ENCODE measurements at regions of chr20 and their contacts with region 1.

Region 1: DNA sequence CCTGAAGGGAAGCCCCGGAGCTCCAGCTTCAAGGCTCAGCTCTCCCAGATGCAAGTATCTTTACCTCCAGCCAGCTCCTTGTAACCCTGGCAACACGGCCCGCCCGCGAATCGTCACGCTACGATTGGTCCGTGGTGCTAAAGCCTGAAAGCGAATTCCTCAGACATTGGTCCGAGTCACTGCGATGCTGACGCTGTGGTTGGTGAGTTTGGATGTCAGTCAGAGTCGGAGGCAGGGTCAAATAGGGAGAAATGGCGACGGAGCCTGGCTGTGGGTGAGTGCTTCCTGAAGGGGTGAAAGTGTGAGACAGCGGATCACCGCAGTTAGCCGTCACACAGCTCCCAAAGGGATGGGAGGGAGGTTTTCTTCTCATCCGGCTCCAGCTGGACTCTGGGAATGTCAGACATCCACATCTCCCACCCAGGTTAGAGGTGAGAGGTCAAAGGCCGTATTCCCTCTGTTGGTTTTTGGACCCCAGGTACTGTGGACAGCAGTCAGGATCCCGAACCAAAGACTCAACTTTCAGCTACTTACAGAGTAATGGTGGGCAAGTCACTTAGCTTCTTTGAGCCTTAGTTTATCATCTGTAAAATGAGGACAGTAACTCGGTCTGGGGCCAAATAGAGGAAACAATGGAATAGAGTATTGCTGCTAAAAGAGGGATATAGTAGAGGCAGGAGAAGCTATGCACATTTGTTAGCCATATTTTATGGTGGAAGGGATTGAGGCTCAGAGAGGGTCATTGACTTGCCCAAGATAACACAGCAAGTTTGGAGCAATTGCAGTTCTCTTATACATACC is at the start of gene ZSWIM1:
- DNase-seq: peak; percentile 100
- ATAC-seq: peak; percentile 99
- H3K4me3 Mint-ChIP-seq: peak within 1 kb of the TSS; percentile 94
- H3K27ac Mint-ChIP-seq: peak within 1 kb of the TSS; percentile 93
- H3K4me1 Mint-ChIP-seq: peaks cover 43% of the 10 kb centered on the region
- H3K27me3 Mint-ChIP-seq: no peaks in the 10 kb centered on the region
- CTCF ChIP-seq: no peak
- total RNA-seq, gene ZSWIM1: 8.2 to 9.1 TPM

Region 2: DNA sequence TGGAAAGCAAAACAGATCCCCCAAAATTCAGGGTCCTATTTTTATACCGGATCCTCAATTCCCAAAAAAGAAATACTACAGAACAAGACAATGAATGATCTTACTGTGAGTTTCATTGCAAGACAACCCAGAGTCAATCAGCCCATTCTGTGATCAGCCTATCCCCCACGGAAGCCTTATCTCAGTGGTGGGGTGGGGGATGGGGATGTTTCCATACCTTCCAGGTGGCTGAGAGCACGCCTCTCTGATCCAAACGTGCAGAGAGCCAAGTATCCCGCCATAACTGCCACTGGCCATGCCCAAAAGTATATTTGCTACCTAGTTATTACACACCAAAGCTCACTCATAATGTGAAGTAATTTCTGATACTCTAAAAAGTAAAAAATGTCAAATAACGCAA is 396.5 kb before region 1 on chr20:
- CTCF ChIA-PET with region 1: no interaction called
- POLR2A ChIA-PET with region 1: no interaction called
- intact Hi-C with region 1: no loop called
- DNase-seq: no peak
- ATAC-seq: no peak
- H3K4me3 Mint-ChIP-seq: no peak overlapping the region
- H3K27ac Mint-ChIP-seq: no peak overlapping the region
- H3K4me1 Mint-ChIP-seq: no peaks in the 10 kb centered on the region
- H3K27me3 Mint-ChIP-seq: peaks cover 35% of the 10 kb centered on the region
- CTCF ChIP-seq: no peak

Region 3: DNA sequence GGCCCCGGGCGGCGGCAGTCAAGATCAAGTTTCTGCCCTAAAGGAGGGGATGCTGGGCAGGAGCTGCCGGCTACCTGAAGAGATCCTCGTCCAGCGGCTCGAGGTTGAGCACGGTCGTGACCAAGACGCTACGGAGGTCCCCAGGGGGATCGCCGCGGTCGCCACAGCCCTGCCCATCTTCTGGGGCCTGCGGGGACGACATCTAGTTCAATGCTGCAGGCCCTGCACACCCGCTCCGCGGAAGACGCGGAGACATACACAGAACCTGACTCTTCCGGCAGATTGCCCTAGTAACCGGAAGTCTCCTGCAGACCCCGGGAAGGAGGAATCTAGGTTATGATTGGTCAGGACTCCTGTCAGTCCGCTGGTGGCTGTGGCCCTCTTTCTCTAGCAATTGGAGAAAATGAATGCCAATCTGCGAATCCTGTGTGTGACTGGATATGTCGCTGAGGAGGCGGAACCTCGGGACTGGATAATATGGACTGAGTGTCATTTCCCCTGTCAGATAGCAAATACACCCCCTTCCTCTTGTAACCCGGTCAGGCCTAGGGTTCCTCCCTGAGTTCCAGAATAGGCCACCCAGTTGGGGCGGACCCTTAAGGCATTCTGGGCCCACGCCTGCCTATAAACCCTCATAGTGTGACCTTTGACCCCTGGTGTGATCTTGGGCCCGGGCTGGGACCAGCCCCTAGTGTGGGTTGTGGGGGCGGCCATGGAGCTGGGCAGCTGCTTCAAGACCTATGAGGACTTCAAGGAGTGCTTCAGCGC is 23.9 kb before region 1 on chr20 and contains the starts of genes ACOT8 and ZSWIM3:
- CTCF ChIA-PET with region 1: interaction called, 4 read pairs
- POLR2A ChIA-PET with region 1: interaction called, 18 read pairs
- intact Hi-C with region 1: no loop called
- DNase-seq: peak; percentile 98
- ATAC-seq: peak; percentile 96
- H3K4me3 Mint-ChIP-seq: peak within 1 kb of the TSS; percentile 97
- H3K27ac Mint-ChIP-seq: peak within 1 kb of the TSS; percentile 99
- H3K4me1 Mint-ChIP-seq: peaks cover 42% of the 10 kb centered on the region
- H3K27me3 Mint-ChIP-seq: no peaks in the 10 kb centered on the region
- CTCF ChIP-seq: no peak
- total RNA-seq, gene ACOT8: 18.5 to 21.2 TPM
- total RNA-seq, gene ZSWIM3: 3.5 to 3.6 TPM

Region 4: DNA sequence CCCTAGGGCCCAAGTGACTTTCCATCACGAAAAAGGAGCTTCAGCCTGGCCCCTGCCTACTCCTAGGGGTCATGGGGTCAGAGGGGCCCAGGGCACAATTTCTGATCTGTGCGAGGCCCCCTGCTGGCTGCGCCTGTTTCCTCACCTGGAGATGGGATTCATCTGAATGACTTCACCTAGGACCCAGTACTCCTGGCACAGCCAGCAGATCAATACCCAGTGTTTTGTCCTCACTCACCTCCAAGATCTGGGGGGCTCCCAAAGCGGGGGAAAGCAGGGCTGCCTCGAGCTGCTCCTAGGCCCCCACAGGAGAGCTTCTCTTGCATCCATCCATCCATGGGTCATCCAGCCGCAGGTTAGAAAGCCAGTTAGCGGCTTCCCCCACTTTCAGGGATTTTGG is 270.7 kb after region 1 on chr20:
- CTCF ChIA-PET with region 1: no interaction called
- POLR2A ChIA-PET with region 1: no interaction called
- intact Hi-C with region 1: no loop called
- DNase-seq: peak; percentile 43
- ATAC-seq: peak; percentile 24
- H3K4me3 Mint-ChIP-seq: no peak overlapping the region
- H3K27ac Mint-ChIP-seq: no peak overlapping the region
- H3K4me1 Mint-ChIP-seq: no peaks in the 10 kb centered on the region
- H3K27me3 Mint-ChIP-seq: peaks cover under 1% of the 10 kb centered on the region
- CTCF ChIP-seq: peak; percentile 31

Region 5: GRCh38 chr20:46215913-46216707 is 334.9 kb after region 1 on chr20:
- CTCF ChIA-PET with region 1: no interaction called
- POLR2A ChIA-PET with region 1: no interaction called
- intact Hi-C with region 1: no loop called
- DNase-seq: no peak
- ATAC-seq: no peak
- H3K4me3 Mint-ChIP-seq: no peak overlapping the region
- H3K27ac Mint-ChIP-seq: no peak overlapping the region
- H3K4me1 Mint-ChIP-seq: no peaks in the 10 kb centered on the region
- H3K27me3 Mint-ChIP-seq: peaks cover 8% of the 10 kb centered on the region
- CTCF ChIP-seq: no peak